ENCODE measurements at regions of chr1 and their contacts with region 1.

Region 1: GRCh38 chr1:5590717-5591116 is 401.5 kb downstream of the NPHP4 start:
- DNase-seq: no peak
- H3K4me3 ChIP-seq: no peak overlapping the region
- H3K27ac ChIP-seq: no peak overlapping the region
- H3K4me1 ChIP-seq: no peaks in the 10 kb centered on the region
- CTCF ChIP-seq: no peak

Region 2: GRCh38 chr1:5548261-5548660 is 42.5 kb before region 1 on chr1:
- CTCF ChIA-PET with region 1: no interaction called
- POLR2A ChIA-PET with region 1: no interaction called
- intact Hi-C with region 1: no loop called
- DNase-seq: no peak
- H3K4me3 ChIP-seq: no peak overlapping the region
- H3K27ac ChIP-seq: no peak overlapping the region
- H3K4me1 ChIP-seq: no peaks in the 10 kb centered on the region
- CTCF ChIP-seq: no peak

Region 3: DNA sequence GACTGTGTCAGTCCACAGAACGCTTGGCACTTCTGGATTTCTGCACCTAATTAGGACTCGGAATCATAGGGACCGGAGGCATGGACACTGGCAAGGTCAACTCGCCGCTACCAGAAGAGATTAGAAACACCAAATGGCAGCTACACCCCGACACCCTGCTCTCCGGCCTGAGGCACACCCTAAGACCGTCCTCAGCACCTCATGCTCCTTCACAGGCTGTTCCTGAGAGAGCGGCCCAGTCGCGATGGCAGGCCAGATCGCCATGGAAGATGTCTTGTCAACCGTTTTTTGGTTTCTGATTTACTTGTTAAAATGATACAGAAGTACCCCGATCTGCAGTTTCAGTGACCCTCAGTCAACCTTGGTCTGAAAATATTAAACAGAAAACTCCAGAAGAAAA is 354.7 kb after region 1 on chr1:
- CTCF ChIA-PET with region 1: interaction called, 23 read pairs
- POLR2A ChIA-PET with region 1: no interaction called
- intact Hi-C with region 1: no loop called
- DNase-seq: no peak
- H3K4me3 ChIP-seq: no peak overlapping the region
- H3K27ac ChIP-seq: no peak overlapping the region
- H3K4me1 ChIP-seq: no peaks in the 10 kb centered on the region
- CTCF ChIP-seq: no peak